AG04449 (cell line): ENCODE measurements at regions of chr12 and their contacts with region 1.

Region 1: DNA sequence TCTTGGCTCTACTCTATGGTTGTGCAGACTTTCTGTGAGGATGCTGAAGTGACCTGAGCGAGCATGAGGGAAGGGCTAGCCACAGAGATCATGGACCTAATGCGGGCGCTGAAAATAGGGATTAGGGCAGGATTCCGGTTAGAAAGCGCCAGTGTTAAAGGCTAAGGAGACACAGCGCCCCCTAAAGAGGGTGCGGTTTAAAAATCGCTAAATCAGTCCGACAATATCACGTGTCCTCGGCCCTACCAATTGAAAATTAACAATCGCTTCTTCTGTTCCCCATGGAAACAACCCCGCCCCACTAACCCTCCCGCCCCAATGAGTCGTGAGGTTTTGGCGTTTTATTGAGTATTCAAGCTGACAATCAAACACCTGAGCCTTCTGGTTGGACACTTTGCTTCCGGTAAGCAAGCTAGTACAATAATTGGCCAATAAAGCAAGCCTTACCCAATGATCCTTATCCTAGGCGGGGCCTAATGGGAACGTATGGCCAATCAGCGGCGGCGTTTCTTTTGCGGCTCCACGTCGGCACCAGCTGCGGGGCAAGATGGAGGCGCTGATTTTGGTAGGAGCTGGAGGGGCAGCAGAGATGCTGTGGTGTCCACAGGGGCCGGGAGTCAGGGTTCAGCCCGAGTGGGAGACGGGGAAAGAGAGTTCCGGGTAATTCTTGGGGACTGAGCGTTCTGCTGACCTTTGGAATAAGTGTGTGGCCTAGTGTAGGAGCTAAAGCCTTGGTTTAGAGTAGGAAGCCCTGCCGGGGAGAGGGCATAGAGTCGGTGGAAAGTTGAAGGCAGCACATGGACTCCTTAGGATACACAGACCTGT is at the start of gene COPZ1:
- DNase-seq: peak; percentile 100
- H3K4me3 ChIP-seq: peak within 1 kb of the TSS; percentile 96
- CTCF ChIP-seq: peak; percentile 83

Region 2: DNA sequence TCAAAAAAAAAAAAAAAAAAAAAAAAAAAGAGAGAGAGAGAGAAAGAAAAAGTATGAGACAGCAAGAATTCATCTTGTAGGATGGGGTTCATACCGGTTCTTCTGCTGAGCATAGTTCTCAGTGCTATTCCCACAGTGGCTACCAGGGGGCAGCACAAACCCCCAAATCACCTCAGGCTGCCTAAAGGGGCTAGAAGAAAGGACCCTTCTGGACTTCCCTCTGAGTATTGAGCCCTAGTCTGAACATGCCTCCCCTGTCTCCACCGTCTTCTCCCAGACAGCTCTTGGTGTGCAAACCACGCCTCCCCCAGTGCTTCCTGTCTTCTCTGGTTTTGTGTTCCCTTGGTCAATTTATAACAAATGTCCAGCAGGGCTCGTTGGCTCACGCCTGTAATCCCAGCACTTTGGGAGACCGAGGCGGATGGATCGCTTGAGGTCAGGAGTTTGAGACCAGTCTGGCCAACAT is 104.7 kb before region 1 on chr12:
- CTCF ChIA-PET with region 1: interaction called, 28 read pairs
- POLR2A ChIA-PET with region 1: no interaction called
- DNase-seq: no peak
- H3K4me3 ChIP-seq: no peak overlapping the region
- CTCF ChIP-seq: peak; percentile 77

Region 3: GRCh38 chr12:54240971-54241588 is 83.7 kb before region 1 on chr12:
- CTCF ChIA-PET with region 1: interaction called, 10 read pairs
- POLR2A ChIA-PET with region 1: no interaction called
- DNase-seq: no peak
- H3K4me3 ChIP-seq: no peak overlapping the region
- CTCF ChIP-seq: no peak

Region 4: GRCh38 chr12:54259194-54260011 is 65.4 kb before region 1 on chr12:
- CTCF ChIA-PET with region 1: interaction called, 16 read pairs
- POLR2A ChIA-PET with region 1: no interaction called
- DNase-seq: no peak
- H3K4me3 ChIP-seq: peak overlapping the region; percentile 2
- CTCF ChIP-seq: no peak

Region 5: DNA sequence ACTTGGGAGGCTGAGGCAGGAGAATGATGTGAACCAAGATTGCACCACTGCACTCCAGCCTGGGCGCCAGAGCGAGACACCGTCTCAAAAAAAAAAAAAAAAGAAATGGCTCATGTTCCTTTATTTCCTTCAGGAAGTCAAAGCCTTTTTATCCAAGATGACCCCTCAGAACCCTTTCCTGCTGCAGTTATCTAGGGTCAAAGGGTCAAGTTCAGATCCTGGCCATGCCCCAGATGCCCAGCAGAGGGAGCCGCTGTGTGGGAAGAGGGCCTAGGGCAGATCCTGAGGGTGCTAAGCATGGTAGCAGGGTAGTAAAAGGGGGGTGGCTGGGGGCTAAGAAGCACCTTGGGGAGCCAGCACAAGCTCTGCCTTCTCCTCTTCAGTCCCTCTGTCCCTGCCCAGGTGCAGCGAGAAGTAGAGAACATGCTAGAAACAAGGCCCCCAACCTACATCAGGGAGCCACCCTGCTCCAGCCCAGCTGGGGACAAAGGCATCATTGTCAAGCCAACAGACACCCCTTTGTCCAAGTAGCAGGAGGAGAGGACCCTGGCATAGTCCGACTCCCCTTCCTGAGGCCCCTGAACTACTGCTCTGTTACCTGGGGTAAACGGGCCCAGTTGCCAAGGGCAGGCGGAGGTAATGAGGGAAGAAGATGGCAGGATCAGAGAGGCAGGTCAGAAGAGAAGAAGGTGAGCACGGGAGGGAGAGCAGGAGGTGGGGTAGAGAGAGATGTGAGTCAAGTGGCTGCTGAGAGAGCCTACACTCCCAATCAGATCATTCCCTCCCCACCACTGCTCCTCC is 30.5 kb before region 1 on chr12:
- CTCF ChIA-PET with region 1: interaction called, 52 read pairs
- POLR2A ChIA-PET with region 1: no interaction called
- DNase-seq: no peak
- H3K4me3 ChIP-seq: no peak overlapping the region
- CTCF ChIP-seq: peak; percentile 87

Region 6: GRCh38 chr12:54306925-54307741 is 17.7 kb before region 1 on chr12:
- CTCF ChIA-PET with region 1: interaction called, 28 read pairs
- POLR2A ChIA-PET with region 1: interaction called, 7 read pairs
- DNase-seq: no peak
- H3K4me3 ChIP-seq: no peak overlapping the region
- CTCF ChIP-seq: no peak

Region 7: GRCh38 chr12:54352022-54352531 is 27.2 kb after region 1 on chr12:
- CTCF ChIA-PET with region 1: interaction called, 14 read pairs
- POLR2A ChIA-PET with region 1: interaction called, 5 read pairs
- DNase-seq: no peak
- H3K4me3 ChIP-seq: no peak overlapping the region; the same call in 1 of the 2 replicates
- CTCF ChIP-seq: no peak

Region 8: DNA sequence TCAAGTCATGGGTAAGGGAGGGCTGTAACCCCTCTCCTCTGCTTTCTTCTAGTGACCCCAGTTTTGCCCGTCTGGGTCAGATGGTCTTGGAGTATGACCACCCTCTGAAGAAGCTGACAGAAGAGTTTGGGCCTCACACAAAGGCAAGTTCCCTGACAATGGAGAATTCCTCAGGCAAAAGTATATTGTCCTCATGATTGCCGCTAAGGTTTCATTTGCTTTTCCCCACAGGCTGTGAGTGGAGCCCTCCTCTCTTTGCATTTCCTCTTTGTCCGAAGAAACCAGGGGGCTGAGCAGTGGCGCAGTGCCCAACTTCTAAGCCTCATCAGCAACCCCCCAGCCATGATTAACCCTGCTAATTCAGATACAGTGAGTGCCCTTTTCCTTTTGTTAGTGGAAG is 184.8 kb after region 1 on chr12:
- CTCF ChIA-PET with region 1: no interaction called
- POLR2A ChIA-PET with region 1: no interaction called
- DNase-seq: no peak
- H3K4me3 ChIP-seq: no peak overlapping the region
- CTCF ChIP-seq: no peak

Region 9: GRCh38 chr12:54650409-54650808 is 325.6 kb after region 1 on chr12:
- CTCF ChIA-PET with region 1: no interaction called
- POLR2A ChIA-PET with region 1: no interaction called
- DNase-seq: no peak
- H3K4me3 ChIP-seq: no peak overlapping the region
- CTCF ChIP-seq: no peak